IMR-90 (cell line): ENCODE measurements at regions of chr1 and their contacts with region 1.

Region 1: DNA sequence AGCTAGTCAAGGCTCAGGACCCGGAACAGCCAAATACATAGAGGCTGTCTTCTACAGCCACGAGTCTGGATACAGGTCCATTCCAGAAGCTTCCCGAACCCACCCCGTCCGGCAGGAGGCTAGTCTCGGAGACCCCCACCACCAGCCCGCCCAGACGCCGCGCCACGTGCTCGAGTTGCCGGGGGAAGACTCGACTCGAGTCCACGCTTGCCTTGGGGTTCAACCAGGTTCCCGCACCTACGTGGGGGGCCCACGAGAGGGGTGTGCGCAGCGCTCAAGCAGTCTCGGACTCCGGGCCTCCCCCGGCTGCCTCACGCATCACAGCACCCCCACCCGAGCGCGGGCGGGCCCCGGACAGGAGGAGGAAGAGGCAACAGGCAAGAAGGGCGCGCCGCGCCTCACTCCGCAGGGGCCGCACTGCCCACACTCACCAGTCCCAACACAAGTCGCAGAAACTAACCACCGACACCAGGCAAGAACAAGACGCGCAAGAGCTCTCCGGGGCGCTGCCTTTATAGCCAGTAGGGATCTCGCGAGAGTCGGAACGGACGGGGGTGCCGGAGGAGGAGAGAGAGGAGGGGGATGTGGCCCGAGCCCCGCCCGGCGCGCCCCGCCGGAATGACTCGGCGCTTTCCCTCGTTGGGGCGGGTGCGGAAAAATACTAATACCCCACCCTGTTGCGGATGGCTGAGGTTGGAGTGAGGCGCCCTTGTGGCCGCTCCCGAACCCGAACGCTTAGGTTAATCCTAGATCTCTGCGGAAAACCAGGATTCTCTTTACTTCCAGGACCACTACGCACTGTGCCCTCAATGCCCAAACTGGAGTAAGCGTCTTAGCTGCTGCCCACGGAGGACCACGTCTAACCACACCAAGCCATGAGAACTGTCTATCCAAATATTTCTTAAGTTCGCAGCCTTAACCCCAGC is at the start of gene PRDX1:
- DNase-seq: peak; percentile 94
- ATAC-seq: peak; percentile 91
- H3K4me3 ChIP-seq: peak within 1 kb of the TSS; percentile 60
- H3K27ac ChIP-seq: peak within 1 kb of the TSS; percentile 98
- H3K4me1 ChIP-seq: peaks cover 7% of the 10 kb centered on the region
- H3K27me3 ChIP-seq: no peaks in the 10 kb centered on the region
- CTCF ChIP-seq: 0 out of 2 replicates have a peak, but pooled peaks have one; percentile 14
- POLR2A ChIP-seq: peak; percentile 100
- RAD21 ChIP-seq: no peak
- total RNA-seq, gene PRDX1: 875 and 883 TPM in 2 replicates

Region 2: GRCh38 chr1:45557422-45557944 is 35.8 kb after region 1 on chr1:
- CTCF ChIA-PET with region 1: interaction called, 3 read pairs
- POLR2A ChIA-PET with region 1: interaction called, 12 read pairs
- dilution Hi-C with region 1: no loop called
- in situ Hi-C with region 1: no loop called
- intact Hi-C with region 1: no loop called
- DNase-seq: no peak
- ATAC-seq: no peak
- H3K4me3 ChIP-seq: no peak overlapping the region
- H3K27ac ChIP-seq: no peak overlapping the region
- H3K4me1 ChIP-seq: peaks cover 3% of the 10 kb centered on the region; the same call in 1 of the 2 replicates
- H3K27me3 ChIP-seq: no peaks in the 10 kb centered on the region
- CTCF ChIP-seq: no peak
- POLR2A ChIP-seq: no peak
- RAD21 ChIP-seq: no peak

Region 3: GRCh38 chr1:45569962-45570581 is 48.4 kb after region 1 on chr1:
- CTCF ChIA-PET with region 1: no interaction called
- POLR2A ChIA-PET with region 1: interaction called, 4 read pairs
- dilution Hi-C with region 1: no loop called
- in situ Hi-C with region 1: loop called (anchors 5 kb)
- intact Hi-C with region 1: no loop called
- DNase-seq: peak; percentile 78
- ATAC-seq: peak; percentile 98
- H3K4me3 ChIP-seq: no peak overlapping the region
- H3K27ac ChIP-seq: no peak overlapping the region
- H3K4me1 ChIP-seq: no peaks in the 10 kb centered on the region
- H3K27me3 ChIP-seq: no peaks in the 10 kb centered on the region
- CTCF ChIP-seq: peak; percentile 97
- POLR2A ChIP-seq: peak; percentile 42; the same call in 1 of the 2 replicates
- RAD21 ChIP-seq: peak; percentile 96

Region 4: DNA sequence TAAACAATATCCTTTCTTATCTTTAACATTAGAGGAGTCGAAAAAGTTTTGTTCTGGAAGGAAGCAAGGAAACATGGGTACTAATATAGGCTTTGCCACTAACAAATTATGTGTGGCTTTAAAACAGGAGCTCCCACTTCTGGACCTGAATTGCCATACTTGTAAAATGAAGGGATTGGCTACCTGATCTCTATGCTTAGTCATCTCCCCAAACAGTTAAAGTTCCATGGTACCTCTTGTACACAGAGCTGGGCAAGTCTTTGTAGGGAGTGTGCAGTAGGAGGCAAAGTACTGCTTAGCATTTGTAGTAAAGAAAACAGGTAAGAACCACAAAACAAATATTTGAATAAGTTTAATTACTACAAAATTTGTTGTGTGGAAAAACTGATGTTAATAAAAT is 363.0 kb after region 1 on chr1:
- CTCF ChIA-PET with region 1: no interaction called
- POLR2A ChIA-PET with region 1: no interaction called
- dilution Hi-C with region 1: no loop called
- in situ Hi-C with region 1: no loop called
- intact Hi-C with region 1: loop called (anchors 5 kb)
- DNase-seq: peak; percentile 37
- ATAC-seq: no peak
- H3K4me3 ChIP-seq: no peak overlapping the region
- H3K27ac ChIP-seq: no peak overlapping the region
- H3K4me1 ChIP-seq: peaks cover 16% of the 10 kb centered on the region
- H3K27me3 ChIP-seq: no peaks in the 10 kb centered on the region
- CTCF ChIP-seq: no peak
- POLR2A ChIP-seq: no peak
- RAD21 ChIP-seq: no peak